Activated T-helper 2 cell treated with anti-CD3 and anti-CD28 coated beads, Interferon-gamma antibody, Interleukin-2, Interleukin-4, amounts not matched to agents 10 μg/mL and 5 μg/mL and 100 μg/mL, durations not matched to agents 14 hours and 24 hours and 36 hours (primary cell): ENCODE measurements at regions of chr13 and their contacts with region 1.

Region 1: DNA sequence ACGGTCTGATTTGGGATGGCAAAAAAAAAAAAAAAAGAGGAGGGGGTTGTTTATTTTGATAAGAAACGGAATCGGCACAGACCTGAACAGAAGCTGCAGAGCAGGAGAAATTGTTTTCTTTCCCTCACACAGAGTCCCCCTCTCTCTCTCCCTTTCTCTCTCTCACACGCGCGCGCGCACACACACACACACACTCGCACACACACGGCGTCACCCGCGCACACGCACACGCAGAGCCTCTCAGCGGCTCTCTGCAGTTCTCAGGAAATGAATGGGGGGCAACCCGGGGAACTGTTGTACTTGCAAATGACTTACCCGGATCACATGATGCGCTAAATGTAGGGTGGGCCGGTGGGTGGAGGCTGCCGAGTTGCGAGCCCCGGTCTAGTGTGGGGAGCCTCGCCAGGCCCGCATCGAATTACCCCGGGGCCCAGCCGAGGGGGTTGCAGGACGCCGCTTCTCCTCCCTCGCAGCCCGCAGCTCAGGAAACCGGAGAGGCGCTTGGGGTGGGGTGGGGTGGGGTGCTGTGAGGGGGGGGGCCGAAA is 475 bp downstream of the KLF12 start:
- DNase-seq: peak; percentile 82
- H3K4me3 Mint-ChIP-seq: peak overlapping the region; percentile 97
- H3K27ac Mint-ChIP-seq: peak overlapping the region; percentile 99
- H3K4me1 Mint-ChIP-seq: peaks cover 32% of the 10 kb centered on the region
- H3K27me3 Mint-ChIP-seq: peaks cover 8% of the 10 kb centered on the region

Region 2: DNA sequence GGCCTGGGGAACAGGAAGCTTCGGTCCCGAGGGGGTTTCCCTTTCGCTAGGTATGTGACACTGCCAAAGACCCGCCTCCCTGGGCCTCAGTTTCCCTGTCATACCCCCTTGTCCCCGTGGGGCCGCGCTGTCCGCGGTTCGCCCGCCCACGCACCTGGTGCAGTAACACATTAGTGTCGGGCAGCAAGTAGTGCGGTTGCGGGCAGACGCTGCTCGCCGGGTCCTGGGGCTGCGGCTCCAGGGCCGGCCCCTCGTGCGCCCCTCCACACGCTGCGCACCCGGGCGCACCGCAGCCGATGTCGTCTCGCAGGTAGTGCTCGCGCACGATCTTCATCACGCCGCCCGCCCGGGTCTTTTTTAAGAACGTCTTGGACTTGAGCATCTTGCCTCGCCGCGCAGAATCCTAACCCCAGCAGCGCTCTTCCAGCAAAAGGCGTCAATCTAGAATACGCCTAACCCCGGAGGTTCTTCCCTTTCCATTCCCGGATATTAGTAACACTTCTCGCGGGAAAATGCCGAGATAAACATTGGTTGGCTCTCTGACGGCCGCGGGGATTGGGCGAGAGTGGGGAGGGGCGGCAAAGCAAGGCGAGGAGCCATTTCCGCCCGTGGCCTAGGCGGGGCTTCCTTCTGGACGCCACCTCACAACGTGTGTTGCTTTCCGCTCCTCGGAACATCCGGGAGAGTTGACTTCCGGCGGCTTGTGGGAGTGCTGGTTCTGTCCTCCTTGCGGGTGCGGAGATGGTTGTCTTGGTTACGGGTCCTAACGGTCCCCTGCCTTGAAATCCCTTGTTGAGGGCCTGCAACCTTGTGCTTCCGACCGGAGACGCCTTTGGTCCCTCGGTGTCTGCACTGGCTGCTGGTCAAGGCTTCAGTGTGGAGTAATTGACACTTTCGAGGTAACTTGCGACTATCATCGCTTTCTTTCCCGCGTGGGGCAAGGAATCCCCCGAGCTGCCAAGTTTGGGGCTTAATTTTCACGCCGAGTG is 1352.0 kb before region 1 on chr13 and contains the starts of genes DIS3 and PIBF1:
- intact Hi-C with region 1: loop called (anchors 5 kb)
- DNase-seq: peak; percentile 98
- H3K4me3 Mint-ChIP-seq: peak within 1 kb of the TSS; percentile 95
- H3K27ac Mint-ChIP-seq: peak within 1 kb of the TSS; percentile 97
- H3K4me1 Mint-ChIP-seq: peaks cover 51% of the 10 kb centered on the region
- H3K27me3 Mint-ChIP-seq: no peaks in the 10 kb centered on the region
- total RNA-seq, gene DIS3: 45.0 and 48.6 TPM in 2 replicates
- total RNA-seq, gene PIBF1: 19.6 and 22.1 TPM in 2 replicates

Region 3: DNA sequence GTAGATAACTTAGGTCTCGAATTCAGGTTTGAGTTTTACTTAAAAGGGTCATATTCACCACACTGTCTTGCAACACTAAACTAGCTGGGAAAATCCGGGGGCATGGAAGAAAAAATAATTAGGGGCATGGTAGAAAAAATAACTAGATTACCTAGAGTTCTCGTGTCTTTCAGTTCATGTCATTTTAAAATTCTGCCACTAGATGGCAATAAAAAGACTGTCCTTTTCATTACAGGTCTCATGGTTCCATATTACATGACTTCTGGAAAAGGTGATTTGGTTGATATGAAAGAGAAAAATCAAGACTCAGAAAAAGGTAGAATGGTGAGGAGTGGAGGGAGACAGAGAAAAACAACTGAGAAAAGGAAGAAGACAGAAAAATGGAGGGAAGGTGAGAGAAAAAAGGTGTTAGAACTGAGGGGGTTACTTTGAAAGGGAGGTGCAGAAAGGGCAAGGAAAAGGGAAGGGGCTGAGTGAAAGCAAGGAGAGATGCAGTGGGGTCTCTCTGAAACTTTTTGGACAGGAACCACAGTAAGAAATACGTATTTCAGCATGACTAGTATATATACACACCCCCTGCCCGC is 298.5 kb before region 1 on chr13:
- intact Hi-C with region 1: loop called (anchors 2 kb)
- DNase-seq: no peak
- H3K4me3 Mint-ChIP-seq: no peak overlapping the region
- H3K27ac Mint-ChIP-seq: no peak overlapping the region
- H3K4me1 Mint-ChIP-seq: peaks cover 6% of the 10 kb centered on the region
- H3K27me3 Mint-ChIP-seq: no peaks in the 10 kb centered on the region

Region 4: DNA sequence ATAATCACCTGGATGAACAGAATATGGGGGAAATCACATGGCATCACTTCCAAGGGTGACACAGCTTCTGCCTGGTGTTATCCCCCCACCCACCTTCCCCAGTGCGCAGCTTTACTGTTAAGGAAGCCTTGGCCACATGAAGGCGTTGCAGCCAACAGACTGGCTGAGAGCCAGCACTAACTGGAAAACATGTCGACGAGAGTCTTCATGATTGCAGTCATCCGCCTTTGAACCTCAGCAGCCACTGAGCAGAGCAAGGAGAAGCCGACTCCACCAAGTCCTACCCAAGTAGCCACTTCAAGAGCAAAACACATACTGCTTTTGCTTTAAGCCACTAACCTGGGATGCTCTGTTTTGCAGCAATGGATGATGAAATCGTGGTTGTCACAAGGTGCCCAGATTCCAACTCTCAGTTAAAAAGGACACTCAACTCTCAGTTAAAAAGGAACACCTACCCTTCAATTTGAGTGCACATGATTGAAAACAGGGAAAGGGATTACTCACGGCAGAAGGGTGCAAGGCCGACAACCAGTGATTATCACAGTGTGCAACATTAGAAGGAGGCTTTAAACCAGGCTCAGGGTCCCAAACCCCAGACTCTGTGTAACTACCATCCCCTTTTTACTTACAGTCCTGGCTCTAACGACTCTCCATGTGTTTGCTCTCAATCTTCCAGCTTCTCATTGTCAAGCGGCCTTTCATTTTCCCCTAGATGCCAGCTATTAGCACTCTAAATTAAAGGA is 148.6 kb before region 1 on chr13:
- intact Hi-C with region 1: loop called (anchors 2 kb)
- DNase-seq: peak; percentile 30
- H3K4me3 Mint-ChIP-seq: peak overlapping the region; percentile 65
- H3K27ac Mint-ChIP-seq: peak overlapping the region; percentile 80
- H3K4me1 Mint-ChIP-seq: peaks cover 33% of the 10 kb centered on the region
- H3K27me3 Mint-ChIP-seq: no peaks in the 10 kb centered on the region

Region 5: GRCh38 chr13:74070065-74070464 is 63.7 kb before region 1 on chr13:
- intact Hi-C with region 1: no loop called
- DNase-seq: peak; percentile 25
- H3K4me3 Mint-ChIP-seq: peak overlapping the region; percentile 53
- H3K27ac Mint-ChIP-seq: peak overlapping the region; percentile 59
- H3K4me1 Mint-ChIP-seq: peaks cover 52% of the 10 kb centered on the region
- H3K27me3 Mint-ChIP-seq: no peaks in the 10 kb centered on the region

Region 6: DNA sequence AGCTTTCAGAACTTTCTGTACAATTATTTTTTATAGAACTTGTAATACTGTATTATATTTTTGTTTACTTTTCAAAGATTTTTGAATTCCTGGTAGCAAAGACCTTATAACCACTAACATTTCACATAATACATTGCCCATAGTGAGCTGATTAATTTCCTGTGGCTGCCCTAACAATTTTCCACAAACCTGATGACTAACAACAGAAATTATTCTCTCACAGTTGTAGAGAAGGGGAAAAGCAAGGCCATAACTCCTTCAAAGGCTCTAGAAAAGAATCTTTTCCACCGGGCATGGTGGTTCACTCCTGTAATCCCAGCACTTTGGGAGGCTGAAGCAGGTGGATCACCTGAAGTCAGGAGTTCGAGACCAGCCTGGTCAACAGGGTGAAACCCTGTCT is 18.6 kb before region 1 on chr13:
- intact Hi-C with region 1: loop called (anchors 2 kb)
- DNase-seq: no peak
- H3K4me3 Mint-ChIP-seq: no peak overlapping the region
- H3K27ac Mint-ChIP-seq: no peak overlapping the region
- H3K4me1 Mint-ChIP-seq: peaks cover 52% of the 10 kb centered on the region
- H3K27me3 Mint-ChIP-seq: no peaks in the 10 kb centered on the region

Region 7: GRCh38 chr13:74158028-74158427 is 24.3 kb after region 1 on chr13:
- intact Hi-C with region 1: no loop called
- DNase-seq: no peak
- H3K4me3 Mint-ChIP-seq: no peak overlapping the region
- H3K27ac Mint-ChIP-seq: no peak overlapping the region
- H3K4me1 Mint-ChIP-seq: peaks cover 10% of the 10 kb centered on the region
- H3K27me3 Mint-ChIP-seq: peaks cover 22% of the 10 kb centered on the region

Region 8: GRCh38 chr13:75326173-75327134 is 1192.7 kb after region 1 on chr13:
- intact Hi-C with region 1: loop called (anchors 10 kb)
- DNase-seq: peak; percentile 56
- H3K4me3 Mint-ChIP-seq: peak overlapping the region; percentile 86
- H3K27ac Mint-ChIP-seq: peak overlapping the region; percentile 95
- H3K4me1 Mint-ChIP-seq: peaks cover 54% of the 10 kb centered on the region
- H3K27me3 Mint-ChIP-seq: no peaks in the 10 kb centered on the region